Caco-2 (cell line): ENCODE measurements at regions of chr9 and their contacts with region 1.

Region 1: DNA sequence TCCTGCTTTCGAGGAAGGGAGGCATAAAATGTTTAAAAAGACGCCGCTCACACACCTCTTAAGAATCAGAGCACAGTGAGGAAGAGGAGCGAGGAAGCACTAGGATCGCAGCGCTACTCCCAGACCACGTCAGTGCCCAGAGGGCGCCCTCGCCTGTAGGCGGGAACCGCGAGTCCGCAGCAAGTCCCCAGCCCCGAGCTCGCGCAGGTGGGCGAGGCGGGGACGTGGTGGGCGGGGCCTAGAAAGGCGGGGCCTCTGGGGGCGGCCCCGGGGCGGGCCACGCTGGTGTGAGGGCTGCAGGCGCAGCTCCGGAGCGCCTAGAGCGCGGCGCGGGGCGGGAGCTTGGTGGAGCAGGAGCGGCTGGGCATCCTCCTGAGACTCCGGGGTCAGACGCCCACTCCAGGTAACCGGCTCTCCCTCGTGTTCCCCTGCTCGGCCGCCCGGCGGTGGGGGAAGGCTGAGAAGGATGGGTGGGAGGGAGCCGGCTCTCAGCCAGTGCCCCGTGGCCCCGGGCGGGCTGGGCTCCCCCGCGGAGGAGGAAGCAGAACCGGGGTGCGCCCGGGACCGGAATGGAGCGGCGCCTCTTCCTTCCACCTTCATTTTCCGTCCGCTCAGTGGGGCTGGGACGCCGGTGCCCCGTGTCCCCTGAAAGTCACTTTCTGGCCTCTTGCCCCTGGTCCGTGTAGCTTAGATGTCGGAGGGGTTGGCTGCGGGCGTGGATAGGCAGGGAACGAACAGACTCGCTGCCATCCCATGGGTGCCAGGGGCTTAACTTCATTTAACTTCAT is at the start of gene GCNT1:
- DNase-seq: peak; percentile 83 to 87
- H3K4me3 ChIP-seq: peak within 1 kb of the TSS; percentile 62
- H3K4me3 Mint-ChIP-seq: peak within 1 kb of the TSS; percentile 91
- H3K27ac Mint-ChIP-seq: peak within 1 kb of the TSS; percentile 58
- H3K4me1 ChIP-seq: no peaks in the 10 kb centered on the region
- H3K4me1 Mint-ChIP-seq: no peaks in the 10 kb centered on the region
- H3K27me3 ChIP-seq: no peaks in the 10 kb centered on the region
- H3K27me3 Mint-ChIP-seq: no peaks in the 10 kb centered on the region
- CTCF ChIP-seq: peak in 1 of 2 experiments; percentile 40
- total RNA-seq, gene GCNT1: 18.9 and 19.1 TPM in 2 replicates

Region 2: GRCh38 chr9:76585487-76586389 is 126.6 kb after region 1 on chr9:
- CTCF ChIA-PET with region 1: no interaction called
- POLR2A ChIA-PET with region 1: no interaction called
- intact Hi-C with region 1: loop called (anchors 10 kb)
- DNase-seq: peak; percentile 36 to 55
- H3K4me3 ChIP-seq: no peak overlapping the region
- H3K4me3 Mint-ChIP-seq: no peak overlapping the region
- H3K27ac Mint-ChIP-seq: no peak overlapping the region
- H3K4me1 ChIP-seq: peaks cover 20% of the 10 kb centered on the region
- H3K4me1 Mint-ChIP-seq: peaks cover 12% of the 10 kb centered on the region
- H3K27me3 ChIP-seq: no peaks in the 10 kb centered on the region
- H3K27me3 Mint-ChIP-seq: no peaks in the 10 kb centered on the region
- CTCF ChIP-seq: no peak

Region 3: GRCh38 chr9:76615177-76615603 is 156.1 kb after region 1 on chr9:
- CTCF ChIA-PET with region 1: no interaction called
- POLR2A ChIA-PET with region 1: no interaction called
- intact Hi-C with region 1: loop called (anchors 1 kb)
- DNase-seq: peak; percentile 58 to 80
- H3K4me3 ChIP-seq: peak overlapping the region; percentile 28
- H3K4me3 Mint-ChIP-seq: peak overlapping the region; percentile 65
- H3K27ac Mint-ChIP-seq: peak overlapping the region; percentile 69
- H3K4me1 ChIP-seq: peaks cover 4% of the 10 kb centered on the region; the same call in 1 of the 2 replicates
- H3K4me1 Mint-ChIP-seq: no peaks in the 10 kb centered on the region
- H3K27me3 ChIP-seq: no peaks in the 10 kb centered on the region
- H3K27me3 Mint-ChIP-seq: no peaks in the 10 kb centered on the region
- CTCF ChIP-seq: no peak

Region 4: DNA sequence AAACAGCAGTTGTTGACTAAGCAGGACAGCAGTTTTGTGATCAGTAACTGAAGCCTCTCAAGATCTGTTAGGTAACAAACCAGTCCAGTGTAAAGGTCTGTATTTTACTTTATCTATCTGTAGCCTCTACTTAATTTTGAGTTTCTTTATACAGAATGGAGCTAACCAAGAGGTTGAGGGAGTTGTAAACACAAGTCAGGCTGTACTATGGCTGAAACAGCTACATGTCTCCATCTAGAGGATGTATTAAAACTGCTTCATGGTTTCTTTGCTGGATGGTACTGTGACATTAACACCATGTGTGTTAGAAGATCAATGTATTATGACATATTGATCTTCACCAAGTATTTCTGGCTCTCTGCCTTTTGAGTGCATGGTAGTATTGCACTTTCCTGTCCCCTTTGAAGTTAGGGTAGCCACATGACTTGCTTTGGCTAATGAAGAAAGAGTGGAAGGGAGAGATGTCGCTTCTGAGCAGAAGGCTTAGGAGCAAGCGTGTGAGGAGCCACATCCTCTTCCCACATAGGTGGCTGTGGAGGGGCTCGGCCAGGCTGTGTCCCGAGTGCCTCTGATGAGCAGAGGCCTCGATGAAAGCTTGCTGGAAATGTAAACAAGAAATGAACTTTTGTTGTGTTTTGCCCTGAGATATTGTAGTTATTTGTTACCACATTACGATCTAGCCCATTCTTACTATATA is 199.6 kb after region 1 on chr9:
- CTCF ChIA-PET with region 1: interaction called, 3 read pairs
- POLR2A ChIA-PET with region 1: no interaction called
- intact Hi-C with region 1: loop called (anchors 1 kb)
- DNase-seq: peak in 1 of 2 experiments; percentile 17
- H3K4me3 ChIP-seq: no peak overlapping the region
- H3K4me3 Mint-ChIP-seq: no peak overlapping the region
- H3K27ac Mint-ChIP-seq: no peak overlapping the region
- H3K4me1 ChIP-seq: no peaks in the 10 kb centered on the region
- H3K4me1 Mint-ChIP-seq: no peaks in the 10 kb centered on the region
- H3K27me3 ChIP-seq: no peaks in the 10 kb centered on the region
- H3K27me3 Mint-ChIP-seq: no peaks in the 10 kb centered on the region
- CTCF ChIP-seq: peak in 1 of 2 experiments; percentile 19

Region 5: GRCh38 chr9:76756268-76756640 is 297.2 kb after region 1 on chr9:
- CTCF ChIA-PET with region 1: no interaction called
- POLR2A ChIA-PET with region 1: no interaction called
- intact Hi-C with region 1: no loop called
- DNase-seq: peak; percentile 22 to 29
- H3K4me3 ChIP-seq: no peak overlapping the region
- H3K4me3 Mint-ChIP-seq: no peak overlapping the region
- H3K27ac Mint-ChIP-seq: no peak overlapping the region
- H3K4me1 ChIP-seq: no peaks in the 10 kb centered on the region
- H3K4me1 Mint-ChIP-seq: no peaks in the 10 kb centered on the region
- H3K27me3 ChIP-seq: no peaks in the 10 kb centered on the region
- H3K27me3 Mint-ChIP-seq: no peaks in the 10 kb centered on the region
- CTCF ChIP-seq: no peak